Activated CD8-positive, alpha-beta memory T cell treated with anti-CD3 and anti-CD28 coated beads, Interleukin-2, amount 10 ng/mL, durations not matched to agents 7 days and 5 days (primary cell): ENCODE measurements at regions of chr16 and their contacts with region 1.

Region 1: DNA sequence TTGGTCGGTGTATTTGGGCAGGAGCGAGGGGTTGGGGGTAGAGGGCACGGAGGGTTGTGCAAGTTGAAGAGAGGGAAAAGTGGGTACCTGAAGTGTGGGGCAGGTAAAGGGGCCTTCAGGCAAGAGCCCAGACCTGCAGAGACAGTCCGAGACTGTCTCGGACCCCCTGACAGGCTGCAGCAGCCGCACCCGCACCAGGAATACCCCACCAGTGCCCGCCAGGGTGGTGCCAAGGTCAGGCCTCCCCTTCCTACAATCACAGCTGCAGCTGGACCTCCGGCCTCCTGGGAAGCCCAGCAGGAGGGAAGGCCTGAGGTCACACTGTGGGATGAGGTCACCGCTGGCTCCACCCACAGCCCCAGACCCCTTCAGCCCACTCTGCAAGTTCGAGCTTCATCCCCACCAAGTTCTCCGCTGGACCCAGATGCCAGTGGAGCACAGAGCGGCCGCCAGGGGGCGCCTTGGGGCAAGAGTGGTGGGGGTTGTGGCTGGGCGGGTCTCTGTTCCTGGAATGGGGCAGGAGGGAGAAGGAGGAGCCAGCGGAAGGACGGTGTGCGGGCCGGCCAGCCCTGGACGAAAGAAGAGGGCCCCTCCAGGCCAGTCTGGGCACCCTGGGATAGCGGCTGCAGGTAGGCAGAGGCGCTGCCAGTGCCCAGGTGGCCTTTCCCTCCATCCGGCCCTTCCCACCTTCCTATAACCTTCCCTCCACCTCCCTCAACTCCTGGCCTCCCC is at the start of gene HSD3B7:
- DNase-seq: peak; percentile 88
- ATAC-seq: peak; percentile 89
- H3K4me3 Mint-ChIP-seq: peak within 1 kb of the TSS; percentile 32
- H3K27ac Mint-ChIP-seq: peak within 1 kb of the TSS; percentile 54
- H3K4me1 Mint-ChIP-seq: peaks cover 15% of the 10 kb centered on the region
- H3K27me3 Mint-ChIP-seq: no peaks in the 10 kb centered on the region
- total RNA-seq, gene HSD3B7: 6.6 to 9.7 TPM

Region 2: GRCh38 chr16:30761928-30762810 is 222.7 kb before region 1 on chr16 and contains the starts of genes CFAP119 and RNF40:
- CTCF ChIA-PET with region 1: no interaction called
- DNase-seq: peak; percentile 96
- ATAC-seq: peak; percentile 96
- H3K4me3 Mint-ChIP-seq: peak within 1 kb of the TSS; percentile 92
- H3K27ac Mint-ChIP-seq: peak within 1 kb of the TSS; percentile 92
- H3K4me1 Mint-ChIP-seq: peaks cover 26% of the 10 kb centered on the region
- H3K27me3 Mint-ChIP-seq: no peaks in the 10 kb centered on the region
- total RNA-seq, gene CFAP119: 4.1 to 4.6 TPM
- total RNA-seq, gene RNF40: 103 to 106 TPM

Region 3: DNA sequence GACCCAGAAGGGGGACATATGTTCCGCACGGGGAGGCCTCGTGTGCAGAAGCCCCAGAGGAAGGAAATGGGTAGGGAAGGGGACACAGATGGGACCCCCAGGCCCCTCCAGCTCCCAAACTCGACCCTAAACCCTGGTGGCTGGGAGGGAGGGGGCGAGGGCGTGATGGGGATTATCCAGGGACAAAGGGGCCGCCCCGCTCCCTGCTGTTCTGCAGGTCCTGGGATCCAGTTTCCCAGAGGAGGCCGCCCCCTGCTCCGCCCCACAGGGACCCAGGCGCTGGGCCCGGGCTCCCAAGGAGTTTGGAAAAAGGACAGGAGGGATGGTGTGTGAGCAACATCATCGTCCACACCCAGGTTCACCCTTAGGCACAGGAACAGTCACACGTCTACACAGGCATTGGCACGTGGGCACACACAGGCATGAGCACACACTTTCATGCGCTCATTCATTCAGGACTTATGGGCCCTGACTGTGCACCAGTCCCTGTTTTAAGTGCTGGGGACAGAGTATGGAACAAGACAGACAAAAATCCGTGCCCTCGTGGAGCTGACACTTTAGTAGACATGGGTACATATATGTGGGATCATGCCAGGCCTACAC is 74.3 kb before region 1 on chr16:
- CTCF ChIA-PET with region 1: no interaction called
- DNase-seq: no peak
- ATAC-seq: no peak
- H3K4me3 Mint-ChIP-seq: no peak overlapping the region
- H3K27ac Mint-ChIP-seq: no peak overlapping the region
- H3K4me1 Mint-ChIP-seq: peaks cover 9% of the 10 kb centered on the region
- H3K27me3 Mint-ChIP-seq: no peaks in the 10 kb centered on the region

Region 4: GRCh38 chr16:30997887-30998711 is 13.3 kb after region 1 on chr16:
- CTCF ChIA-PET with region 1: interaction called, 28 read pairs
- DNase-seq: no peak
- ATAC-seq: no peak
- H3K4me3 Mint-ChIP-seq: peak overlapping the region; percentile 81
- H3K27ac Mint-ChIP-seq: no peak overlapping the region
- H3K4me1 Mint-ChIP-seq: peaks cover 26% of the 10 kb centered on the region
- H3K27me3 Mint-ChIP-seq: peaks cover 11% of the 10 kb centered on the region

Region 5: GRCh38 chr16:31073968-31074813 is 89.4 kb after region 1 on chr16 and contains the starts of genes ZNF646 and ZNF668:
- CTCF ChIA-PET with region 1: interaction called, 17 read pairs
- DNase-seq: peak; percentile 100
- ATAC-seq: peak; percentile 79
- H3K4me3 Mint-ChIP-seq: peak within 1 kb of the TSS; percentile 96
- H3K27ac Mint-ChIP-seq: peak within 1 kb of the TSS; percentile 96
- H3K4me1 Mint-ChIP-seq: peaks cover 45% of the 10 kb centered on the region
- H3K27me3 Mint-ChIP-seq: no peaks in the 10 kb centered on the region
- total RNA-seq, gene ZNF646: 31.8 to 37.7 TPM
- total RNA-seq, gene ZNF668: 18.0 to 20.5 TPM

Region 6: DNA sequence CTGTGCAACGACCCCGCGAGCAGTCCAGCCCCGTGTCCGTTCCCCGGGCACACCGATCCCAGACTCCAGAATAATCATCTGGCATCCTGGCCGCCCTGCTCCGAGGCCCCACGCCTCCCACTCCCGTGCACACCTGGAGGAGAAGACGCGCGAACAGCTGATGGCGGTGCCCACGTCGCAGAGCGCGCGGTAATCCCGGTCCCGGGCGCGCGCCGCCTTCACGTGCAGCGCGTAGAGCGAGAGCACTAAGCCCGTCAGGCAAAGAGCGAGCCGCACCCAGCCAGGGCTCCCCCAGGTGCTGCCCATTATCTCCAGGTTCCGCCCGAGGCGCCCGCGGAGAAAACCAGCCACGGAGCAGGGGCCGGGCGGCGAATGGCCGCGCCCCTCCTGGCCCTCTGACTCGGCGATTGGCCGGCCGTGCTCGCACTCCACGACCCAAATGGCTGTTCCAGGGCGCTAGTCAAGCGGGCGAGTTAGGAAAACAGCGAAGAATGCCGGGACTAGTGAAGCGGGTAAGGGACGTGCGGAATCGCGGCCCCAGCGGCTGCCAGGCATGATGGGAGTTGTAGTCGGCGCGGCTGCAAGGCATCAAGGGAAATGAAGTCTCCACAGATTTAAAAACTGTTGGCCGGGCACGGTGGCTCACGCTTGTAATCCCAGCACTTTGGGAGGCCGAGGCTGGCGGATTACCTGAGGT is 109.7 kb after region 1 on chr16 and contains the start of gene VKORC1:
- CTCF ChIA-PET with region 1: interaction called, 97 read pairs
- DNase-seq: peak; percentile 93
- ATAC-seq: peak; percentile 88
- H3K4me3 Mint-ChIP-seq: peak within 1 kb of the TSS; percentile 98
- H3K27ac Mint-ChIP-seq: peak within 1 kb of the TSS; percentile 90
- H3K4me1 Mint-ChIP-seq: peaks cover 30% of the 10 kb centered on the region
- H3K27me3 Mint-ChIP-seq: no peaks in the 10 kb centered on the region
- total RNA-seq, gene VKORC1: 66.3 to 68.9 TPM

Region 7: DNA sequence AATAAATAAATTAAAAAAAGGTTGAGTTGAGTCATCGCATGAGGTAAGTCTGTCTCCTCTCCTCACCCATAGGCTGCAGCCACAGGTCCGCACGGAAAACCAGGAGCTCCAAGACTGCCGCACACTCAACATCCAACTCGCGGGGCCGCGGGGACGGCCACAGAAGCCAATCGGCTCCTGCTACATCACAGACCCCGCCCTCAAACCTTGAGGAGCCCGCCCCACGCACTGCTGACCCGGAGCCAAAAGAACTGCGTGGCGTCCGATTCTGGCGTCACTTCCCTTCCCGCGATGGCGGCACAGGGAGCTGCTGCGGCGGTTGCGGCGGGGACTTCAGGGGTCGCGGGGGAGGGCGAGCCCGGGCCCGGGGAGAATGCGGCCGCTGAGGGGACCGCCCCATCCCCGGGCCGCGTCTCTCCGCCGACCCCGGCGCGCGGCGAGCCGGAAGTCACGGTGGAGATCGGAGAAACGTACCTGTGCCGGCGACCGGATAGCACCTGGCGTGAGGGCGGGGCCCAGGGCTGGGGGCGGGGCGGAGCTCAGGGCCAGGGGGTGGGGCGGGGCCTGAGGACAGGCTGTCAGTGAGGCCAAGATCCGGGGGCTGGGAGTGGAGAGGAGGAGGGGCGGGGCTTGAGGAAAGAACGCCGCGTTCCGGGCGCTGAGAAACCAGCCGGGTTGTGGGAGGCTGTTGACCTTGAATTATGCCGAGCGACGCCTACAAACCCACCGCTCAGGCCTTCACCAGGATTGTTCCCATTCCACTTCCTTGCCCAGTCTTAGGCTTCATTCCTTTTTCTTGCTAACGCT is 132.8 kb after region 1 on chr16 and contains the start of gene KAT8:
- CTCF ChIA-PET with region 1: interaction called, 12 read pairs
- DNase-seq: peak; percentile 99
- ATAC-seq: peak; percentile 96
- H3K4me3 Mint-ChIP-seq: peak within 1 kb of the TSS; percentile 87
- H3K27ac Mint-ChIP-seq: peak within 1 kb of the TSS; percentile 83
- H3K4me1 Mint-ChIP-seq: peaks cover 25% of the 10 kb centered on the region
- H3K27me3 Mint-ChIP-seq: no peaks in the 10 kb centered on the region
- total RNA-seq, gene KAT8: 54.8 to 56.1 TPM

Region 8: DNA sequence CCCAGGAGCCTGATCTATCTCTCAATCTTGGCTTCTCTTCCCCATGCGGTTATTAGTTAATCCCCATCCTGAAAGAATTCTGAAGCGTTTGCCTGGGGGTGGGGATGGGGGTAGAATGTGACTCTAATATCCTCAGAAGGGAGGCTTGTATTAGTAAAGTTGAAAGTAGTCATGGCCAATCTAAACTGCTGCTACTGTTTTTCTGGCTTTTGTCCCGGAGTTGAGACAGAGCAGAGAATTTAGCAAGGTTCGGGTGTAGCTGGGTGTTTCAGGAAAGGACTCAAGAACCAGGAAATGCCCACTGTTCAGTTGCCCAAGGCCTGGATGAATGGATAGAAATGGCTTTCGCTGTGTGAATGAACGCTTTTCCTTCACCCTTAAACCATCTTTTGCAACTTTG is 257.4 kb after region 1 on chr16:
- CTCF ChIA-PET with region 1: no interaction called
- DNase-seq: no peak
- ATAC-seq: no peak
- H3K4me3 Mint-ChIP-seq: no peak overlapping the region
- H3K27ac Mint-ChIP-seq: no peak overlapping the region
- H3K4me1 Mint-ChIP-seq: no peaks in the 10 kb centered on the region
- H3K27me3 Mint-ChIP-seq: peaks cover 16% of the 10 kb centered on the region